Spleen (tissue), 13 donors: ENCODE measurements at regions of chr6 and their contacts with region 1.

Region 1: GRCh38 chr6:35736253-35736894 is 458 bp upstream of the ARMC12 start:
- DNase-seq: peak; percentile 94
- H3K4me3 ChIP-seq: no peak overlapping the region
- H3K27ac ChIP-seq: peak overlapping the region in 4 of 8 donors; percentile 35 to 100 (median 74)
- H3K4me1 ChIP-seq: peaks cover 26 to 78% (median 65%) of the 10 kb centered on the region in 6 donors
- H3K27me3 ChIP-seq: no peaks in the 10 kb centered on the region
- CTCF ChIP-seq: peak; percentile 85 to 97 (median 91)
- POLR2A ChIP-seq: no peak

Region 2: GRCh38 chr6:35522660-35523658 is 213.4 kb before region 1 on chr6:
- intact Hi-C with region 1: loop called (anchors 5 kb)
- DNase-seq: peak; percentile 92
- H3K4me3 ChIP-seq: peak overlapping the region in 6 of 8 donors; percentile 6 to 60 (median 26)
- H3K27ac ChIP-seq: peak overlapping the region in 3 of 8 donors; percentile 22 to 50 (median 36)
- H3K4me1 ChIP-seq: peaks cover 0 to 20% (median 14%) of the 10 kb centered on the region in 6 donors
- H3K27me3 ChIP-seq: peaks cover 0 to 13% (median 0%) of the 10 kb centered on the region in 7 donors
- CTCF ChIP-seq: peak; percentile 85 to 99 (median 98)
- POLR2A ChIP-seq: no peak

Region 3: GRCh38 chr6:35583893-35584688 is 152.3 kb before region 1 on chr6:
- intact Hi-C with region 1: loop called (anchors 2 kb)
- DNase-seq: no peak
- H3K4me3 ChIP-seq: no peak overlapping the region
- H3K27ac ChIP-seq: peak overlapping the region in 6 of 8 donors; percentile 41 to 96 (median 76)
- H3K4me1 ChIP-seq: peaks cover 11 to 75% (median 41%) of the 10 kb centered on the region in 6 donors
- H3K27me3 ChIP-seq: no peaks in the 10 kb centered on the region
- CTCF ChIP-seq: peak; percentile 51 to 88 (median 80)
- POLR2A ChIP-seq: no peak

Region 4: DNA sequence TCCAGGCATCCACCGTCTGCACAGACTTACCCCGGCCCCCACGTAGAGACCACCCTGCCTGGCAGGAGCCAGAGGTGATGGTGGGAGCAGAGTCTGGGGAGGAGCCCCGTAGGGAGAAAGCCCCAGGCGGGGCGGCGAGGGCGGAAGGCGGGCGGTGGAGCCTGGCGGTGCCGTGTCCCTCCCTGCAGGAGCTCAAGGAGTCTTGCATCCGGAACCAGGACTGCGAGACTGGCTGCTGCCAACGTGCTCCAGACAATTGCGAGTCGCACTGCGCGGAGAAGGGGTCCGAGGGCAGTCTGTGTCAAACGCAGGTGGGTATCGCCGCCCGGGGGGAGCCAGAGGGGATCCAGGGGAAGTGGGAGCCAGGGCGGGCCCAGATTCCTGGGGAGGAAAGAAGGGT is 50.4 kb after region 1 on chr6:
- intact Hi-C with region 1: no loop called
- DNase-seq: no peak
- H3K4me3 ChIP-seq: no peak overlapping the region
- H3K27ac ChIP-seq: no peak overlapping the region
- H3K4me1 ChIP-seq: peaks cover 0 to 7% (median 0%) of the 10 kb centered on the region in 6 donors
- H3K27me3 ChIP-seq: peaks cover 0 to 63% (median 32%) of the 10 kb centered on the region in 7 donors
- CTCF ChIP-seq: no peak
- POLR2A ChIP-seq: no peak

Region 5: DNA sequence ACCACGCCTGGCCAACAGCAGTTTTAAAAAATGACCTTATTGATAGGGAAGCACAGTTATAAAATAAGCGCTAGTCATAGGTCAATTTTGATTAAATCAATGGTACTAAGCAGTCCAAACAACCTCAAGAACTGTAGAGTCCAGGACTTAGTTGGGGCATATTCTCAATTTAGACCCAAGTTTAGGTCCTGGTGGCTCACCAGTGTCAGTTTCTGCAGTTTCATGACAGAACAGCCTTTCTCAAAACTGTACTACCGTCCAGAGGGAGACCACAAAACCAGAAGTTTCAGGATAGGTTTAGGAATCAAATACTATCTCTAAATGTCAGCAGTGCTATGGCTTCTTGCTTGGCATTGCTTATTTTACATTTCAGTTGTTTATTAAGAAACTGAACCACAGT is 107.9 kb after region 1 on chr6:
- intact Hi-C with region 1: no loop called
- DNase-seq: no peak
- H3K4me3 ChIP-seq: no peak overlapping the region
- H3K27ac ChIP-seq: no peak overlapping the region
- H3K4me1 ChIP-seq: no peaks in the 10 kb centered on the region
- H3K27me3 ChIP-seq: no peaks in the 10 kb centered on the region
- CTCF ChIP-seq: no peak
- POLR2A ChIP-seq: no peak

Region 6: DNA sequence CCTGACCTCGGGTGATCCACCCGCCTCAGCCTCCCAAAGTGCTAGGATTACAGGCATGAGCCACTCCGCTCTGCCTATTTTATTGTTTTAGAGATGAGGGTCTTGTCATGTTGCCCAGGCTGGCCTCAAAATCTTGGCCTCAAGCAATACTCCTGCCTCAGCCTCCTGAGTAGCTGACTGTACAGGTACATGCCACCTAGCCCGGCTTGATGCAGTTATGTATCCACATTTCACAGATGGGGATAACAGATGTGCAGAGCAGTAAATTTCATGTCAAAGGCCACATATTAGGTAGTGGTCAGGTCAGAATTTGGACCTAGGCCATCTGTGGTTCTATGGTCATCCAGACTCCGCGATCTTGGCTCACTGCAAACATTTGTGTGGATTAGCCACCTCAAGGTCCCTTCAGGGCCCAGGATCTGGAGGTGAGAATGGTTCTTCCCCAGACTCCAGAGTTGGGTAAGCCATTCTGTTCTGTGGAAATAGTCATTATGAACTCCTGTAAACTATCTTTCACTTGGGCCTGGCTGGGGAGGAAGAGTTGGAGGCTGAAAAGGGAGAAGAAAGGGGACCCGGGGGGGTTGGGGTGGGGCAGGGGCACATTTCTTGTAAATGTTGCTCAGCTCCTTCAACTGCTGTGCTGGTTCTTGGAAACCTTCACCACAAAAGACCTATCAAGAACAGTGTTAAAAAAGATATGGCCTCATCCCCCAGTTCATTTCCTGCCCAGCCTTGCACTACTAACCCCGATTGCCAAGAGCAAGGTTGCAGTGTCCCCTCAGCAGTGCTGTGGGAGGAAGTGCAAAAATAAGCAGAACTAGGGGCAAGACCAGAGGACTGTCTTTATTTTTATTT is 1446.6 kb after region 1 on chr6:
- intact Hi-C with region 1: no loop called
- DNase-seq: peak; percentile 87
- H3K4me3 ChIP-seq: peak overlapping the region in 1 of 8 donors; percentile 18
- H3K27ac ChIP-seq: peak overlapping the region; percentile 63 to 95 (median 88)
- H3K4me1 ChIP-seq: peaks cover 21 to 94% (median 59%) of the 10 kb centered on the region in 6 donors
- H3K27me3 ChIP-seq: no peaks in the 10 kb centered on the region
- CTCF ChIP-seq: no peak
- POLR2A ChIP-seq: no peak